HEK293T (cell line): ENCODE measurements at regions of chr4 and their contacts with region 1.

Region 1: DNA sequence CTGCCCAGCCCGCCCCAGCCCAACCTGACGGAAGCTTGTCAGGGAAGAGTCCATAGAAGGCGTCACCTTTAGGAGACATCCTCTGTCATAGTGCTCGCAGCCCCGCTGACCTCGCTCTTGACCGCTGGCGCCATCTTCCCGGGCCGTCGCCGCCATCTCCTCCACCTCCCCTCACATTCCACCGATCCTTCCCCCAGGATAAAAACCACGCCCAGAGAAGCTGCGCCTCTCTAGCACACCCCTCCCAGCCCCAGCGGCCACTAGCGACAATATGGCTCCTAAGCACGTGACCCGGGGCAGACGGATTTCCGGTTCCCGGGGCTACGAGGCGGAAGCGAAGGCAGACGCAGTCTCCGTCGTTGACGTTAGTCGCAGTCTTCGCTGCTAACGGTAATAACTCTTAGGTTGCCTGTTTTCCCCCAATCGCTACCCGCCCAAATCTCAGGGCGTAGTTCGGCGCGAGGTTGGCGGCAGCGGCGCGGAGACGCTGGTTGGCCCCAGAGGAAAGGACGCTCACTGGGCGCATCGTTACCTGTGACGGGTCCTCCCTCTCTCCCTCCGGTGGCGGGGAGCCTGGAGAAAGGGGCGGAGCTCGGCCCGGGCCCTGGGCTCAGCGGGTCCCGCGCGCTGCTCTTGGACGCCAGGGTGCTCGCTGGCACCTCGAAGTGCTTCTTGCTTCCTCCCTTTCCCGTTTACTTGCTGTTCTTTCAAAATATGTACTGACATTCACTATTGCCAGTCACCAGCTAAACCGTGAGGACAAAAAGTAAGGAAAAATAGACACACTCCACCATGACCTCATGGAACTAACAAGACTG is at the starts of genes RCHY1 and THAP6:
- DNase-seq: peak; percentile 91

Region 2: DNA sequence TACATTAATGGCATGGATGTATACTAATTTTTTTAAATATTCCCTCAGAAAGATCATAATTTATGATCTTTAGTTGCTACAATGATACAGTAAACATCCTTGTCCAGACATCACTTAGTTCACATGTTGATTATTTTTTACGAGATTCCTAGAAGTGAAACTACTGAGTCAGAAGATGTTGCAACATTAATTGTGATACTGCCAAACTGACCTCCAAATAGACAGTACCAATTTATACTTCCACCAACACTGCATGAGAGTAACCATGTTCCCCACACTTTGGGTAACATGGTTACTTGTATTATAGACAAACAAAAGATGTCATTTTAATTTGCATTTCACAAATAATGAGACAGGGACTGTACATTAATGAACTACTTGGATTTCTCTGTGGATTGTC is 19.8 kb before region 1 on chr4:
- CTCF ChIA-PET with region 1: no interaction called
- POLR2A ChIA-PET with region 1: interaction called, 12 read pairs
- DNase-seq: no peak

Region 3: GRCh38 chr4:75525910-75526309 is 11.6 kb after region 1 on chr4:
- CTCF ChIA-PET with region 1: interaction called, 3 read pairs
- POLR2A ChIA-PET with region 1: interaction called, 10 read pairs
- DNase-seq: no peak